ENCODE measurements at regions of chr11 and their contacts with region 1.

Region 1: DNA sequence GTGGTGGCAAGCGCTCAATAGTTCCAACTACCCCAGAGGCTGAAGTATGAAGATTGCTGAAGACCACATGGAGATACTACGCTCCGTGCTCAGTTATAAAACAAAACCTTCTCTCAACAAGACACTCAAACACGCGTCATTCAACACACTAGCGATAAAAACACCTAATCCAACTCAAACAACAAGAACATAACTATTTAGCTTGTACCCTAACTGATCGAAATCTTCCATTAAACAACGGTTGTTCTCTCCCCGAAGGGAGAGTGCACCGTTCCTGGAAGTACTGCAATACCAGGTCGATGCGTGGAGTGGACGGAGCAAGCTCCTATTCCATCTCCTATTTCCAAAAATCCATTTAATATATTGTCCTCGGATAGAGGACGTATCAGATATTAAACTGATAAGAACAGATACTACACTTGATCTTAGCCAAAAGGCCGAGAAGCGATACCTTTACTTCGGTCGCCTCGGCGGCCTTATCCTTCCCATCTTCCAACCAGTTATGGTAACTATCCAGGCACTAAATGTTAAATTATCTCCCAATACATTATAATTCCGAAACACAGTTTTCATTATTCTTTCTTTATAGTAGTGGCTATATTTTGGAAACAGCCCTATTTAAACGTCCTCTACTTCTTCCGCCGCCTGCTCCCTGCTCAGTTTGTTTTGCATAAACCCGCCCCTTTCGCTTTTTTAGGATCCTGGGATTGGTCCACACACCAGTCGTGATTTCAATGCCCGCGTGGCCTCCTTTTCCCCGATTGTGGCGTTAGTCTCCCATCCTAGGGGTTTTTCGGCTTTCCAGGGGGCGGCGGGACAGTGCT is 2.2 kb upstream of the WDR74 start:
- DNase-seq: peak; percentile 99
- H3K4me3 ChIP-seq: peak overlapping the region; percentile 49
- CTCF ChIP-seq: no peak

Region 2: DNA sequence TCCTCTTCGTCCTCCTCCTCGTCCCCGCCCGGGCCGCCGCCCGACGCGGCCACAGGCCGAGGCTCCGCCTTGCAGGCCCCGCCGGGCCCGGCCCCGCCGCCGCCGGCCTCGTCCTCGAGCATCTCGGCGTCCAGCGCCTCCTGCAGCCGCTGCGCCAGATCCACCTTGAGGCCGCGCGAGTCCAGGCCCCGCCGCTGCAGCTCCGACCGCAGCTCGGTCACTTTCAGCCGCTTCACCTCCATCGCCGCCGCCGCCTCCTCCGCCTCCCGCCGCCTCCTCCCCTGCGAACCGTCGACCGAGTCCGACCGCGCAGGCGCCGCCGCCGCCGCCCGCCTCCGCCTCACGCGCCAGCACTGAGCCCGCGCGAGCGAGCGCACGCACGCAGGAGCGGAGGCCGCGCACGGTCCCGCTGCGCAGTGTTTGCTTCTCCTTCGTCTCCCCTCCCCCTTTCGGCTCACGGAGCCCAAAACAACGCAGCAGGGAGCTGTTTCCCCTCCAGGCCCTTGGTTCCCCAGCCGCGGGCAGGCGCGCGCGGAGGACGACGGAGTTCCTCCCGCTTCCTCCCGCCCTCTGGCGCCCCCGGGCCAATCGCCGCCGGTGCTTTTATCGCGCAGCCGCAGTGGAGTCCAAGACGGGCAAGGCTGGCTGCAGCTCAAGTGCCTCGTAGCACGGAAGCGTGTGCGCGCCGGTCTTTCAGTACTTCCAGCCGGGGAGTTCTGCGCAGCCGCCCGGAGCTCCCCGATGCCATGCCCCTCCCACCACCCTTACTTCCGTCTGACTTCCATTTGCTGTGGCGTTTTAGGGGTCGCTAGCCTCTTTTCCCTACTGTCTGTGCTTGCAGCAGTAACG is 114.4 kb before region 1 on chr11 and contains the start of gene HNRNPUL2:
- CTCF ChIA-PET with region 1: no interaction called
- POLR2A ChIA-PET with region 1: interaction called, 15 read pairs
- DNase-seq: peak; percentile 92
- H3K4me3 ChIP-seq: peak within 1 kb of the TSS; percentile 96
- CTCF ChIP-seq: peak; percentile 4

Region 3: DNA sequence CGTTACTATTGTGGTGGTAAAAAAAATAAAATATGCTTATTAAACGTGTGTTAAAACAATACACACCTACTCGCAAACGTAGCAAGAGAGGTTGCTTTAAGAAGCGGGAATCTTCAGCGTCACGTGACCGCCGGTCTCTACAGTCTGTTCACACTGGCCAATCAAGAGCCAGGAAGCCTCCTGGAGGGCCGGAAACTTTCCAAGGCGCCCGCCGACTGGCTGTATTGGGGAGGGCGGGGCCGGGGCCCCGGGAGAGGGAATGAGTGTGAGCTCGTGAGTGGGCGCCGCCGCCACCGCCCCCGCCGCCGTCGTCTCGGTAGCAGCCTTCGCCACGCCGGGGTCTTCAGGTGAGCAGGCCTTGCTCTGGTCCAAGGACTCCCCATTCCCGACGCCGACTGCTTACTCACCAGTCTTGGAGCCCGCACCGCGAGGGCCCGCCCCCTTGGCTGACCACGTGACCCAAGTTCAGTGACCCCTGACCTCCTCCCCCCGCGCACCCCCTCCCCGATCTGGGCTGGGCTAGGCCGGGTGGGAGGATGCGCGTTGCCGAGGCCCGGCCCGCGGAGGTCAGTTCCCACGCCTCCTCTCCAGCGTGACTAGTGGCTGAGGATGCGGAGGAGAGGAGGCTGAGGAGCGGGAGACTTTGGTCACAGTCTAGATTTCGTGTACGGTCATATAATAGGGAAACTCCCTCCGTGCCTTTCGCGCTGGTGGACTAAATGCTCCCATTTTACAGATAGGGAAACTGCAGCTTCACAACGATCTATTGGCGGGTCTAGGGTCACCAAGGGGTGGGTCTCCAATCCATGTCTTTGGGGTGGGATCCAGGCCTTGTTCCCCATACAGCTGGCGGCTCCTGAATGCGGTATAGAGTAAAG is 70.2 kb before region 1 on chr11 and contains the start of gene TAF6L:
- CTCF ChIA-PET with region 1: no interaction called
- POLR2A ChIA-PET with region 1: interaction called, 11 read pairs
- DNase-seq: peak; percentile 71
- H3K4me3 ChIP-seq: peak within 1 kb of the TSS; percentile 86
- CTCF ChIP-seq: no peak

Region 4: DNA sequence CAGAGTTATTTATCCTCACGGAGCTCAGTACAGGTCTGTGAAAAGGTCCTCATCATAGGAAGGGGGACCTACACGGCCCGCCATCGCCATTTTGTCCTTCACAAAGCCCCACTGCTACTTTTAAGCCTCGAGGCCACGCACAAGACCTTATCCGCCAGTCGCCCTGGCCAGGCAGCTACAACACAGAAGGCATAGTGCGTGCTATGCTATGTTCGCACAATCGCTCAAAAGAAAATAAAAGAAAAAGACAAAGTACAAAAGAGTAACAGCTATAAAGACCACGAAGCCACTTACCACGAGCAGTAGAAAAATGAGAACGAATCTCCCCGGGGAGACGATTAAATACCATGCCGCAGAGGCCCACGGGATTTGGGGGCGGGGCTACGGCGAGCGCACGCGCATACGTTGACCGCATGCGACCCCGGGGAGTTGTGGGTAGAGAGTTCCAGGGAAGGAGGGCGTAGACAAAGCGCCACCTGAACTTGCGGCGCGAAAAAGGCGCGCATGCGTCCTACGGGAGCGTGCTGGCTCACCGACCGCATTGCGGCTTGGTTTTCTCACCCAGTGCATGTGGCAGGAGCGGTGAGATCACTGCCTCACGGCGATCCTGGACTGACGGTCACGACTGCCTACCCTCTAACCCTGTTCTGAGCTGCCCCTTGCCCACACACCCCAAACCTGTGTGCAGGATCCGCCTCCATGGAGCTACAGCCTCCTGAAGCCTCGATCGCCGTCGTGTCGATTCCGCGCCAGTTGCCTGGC is 14.2 kb after region 1 on chr11:
- CTCF ChIA-PET with region 1: interaction called, 7 read pairs
- POLR2A ChIA-PET with region 1: interaction called, 193 read pairs
- DNase-seq: peak; percentile 82
- H3K4me3 ChIP-seq: peak overlapping the region; percentile 92
- CTCF ChIP-seq: no peak